Activated CD4-positive, alpha-beta memory T cell treated with anti-CD3 and anti-CD28 coated beads for 36 hours (primary cell): ENCODE measurements at regions of chr10 and their contacts with region 1.

Region 1: DNA sequence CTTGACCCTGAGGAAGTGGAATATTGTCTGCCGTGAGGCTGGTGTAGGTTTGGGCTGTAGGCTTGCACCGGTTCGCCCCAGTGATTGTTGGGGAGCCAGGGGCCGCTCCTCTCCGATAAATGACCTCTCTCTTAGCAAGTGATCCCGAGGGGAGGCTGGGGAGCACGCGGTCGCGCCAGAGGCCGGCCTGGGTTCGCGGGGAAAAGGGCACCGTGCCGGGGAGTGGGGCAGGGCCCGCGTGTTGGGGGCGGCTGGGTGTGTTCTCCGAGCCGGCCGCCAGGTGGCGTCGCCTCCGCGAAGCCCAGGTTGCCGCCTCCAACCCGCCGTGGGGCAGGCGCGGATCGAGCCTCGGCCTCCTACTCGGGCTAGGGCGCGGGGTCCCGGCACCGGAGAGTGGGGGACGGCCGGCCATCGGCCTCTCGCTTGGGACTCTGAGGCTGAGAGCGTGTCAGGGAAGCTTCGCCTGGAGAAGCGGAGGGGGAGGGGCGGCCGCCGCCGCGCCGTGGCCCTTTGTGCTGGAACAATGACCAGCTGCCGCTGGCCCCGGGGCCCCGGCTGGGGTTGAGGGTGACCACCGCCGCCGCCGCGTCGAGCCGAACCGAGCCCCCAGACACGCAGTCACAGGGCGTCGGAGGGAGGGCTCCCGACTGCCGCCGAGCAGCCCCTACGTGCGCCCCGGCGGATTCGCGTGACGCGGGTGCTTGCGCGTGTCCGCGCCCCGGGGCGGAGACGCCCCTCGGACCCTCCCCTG is 442 bp upstream of the LZTS2 start:
- DNase-seq: peak; percentile 81
- H3K4me3 Mint-ChIP-seq: peak overlapping the region; percentile 76
- H3K27ac Mint-ChIP-seq: peak overlapping the region; percentile 79
- H3K4me1 Mint-ChIP-seq: peaks cover 20% of the 10 kb centered on the region
- H3K27me3 Mint-ChIP-seq: no peaks in the 10 kb centered on the region

Region 2: DNA sequence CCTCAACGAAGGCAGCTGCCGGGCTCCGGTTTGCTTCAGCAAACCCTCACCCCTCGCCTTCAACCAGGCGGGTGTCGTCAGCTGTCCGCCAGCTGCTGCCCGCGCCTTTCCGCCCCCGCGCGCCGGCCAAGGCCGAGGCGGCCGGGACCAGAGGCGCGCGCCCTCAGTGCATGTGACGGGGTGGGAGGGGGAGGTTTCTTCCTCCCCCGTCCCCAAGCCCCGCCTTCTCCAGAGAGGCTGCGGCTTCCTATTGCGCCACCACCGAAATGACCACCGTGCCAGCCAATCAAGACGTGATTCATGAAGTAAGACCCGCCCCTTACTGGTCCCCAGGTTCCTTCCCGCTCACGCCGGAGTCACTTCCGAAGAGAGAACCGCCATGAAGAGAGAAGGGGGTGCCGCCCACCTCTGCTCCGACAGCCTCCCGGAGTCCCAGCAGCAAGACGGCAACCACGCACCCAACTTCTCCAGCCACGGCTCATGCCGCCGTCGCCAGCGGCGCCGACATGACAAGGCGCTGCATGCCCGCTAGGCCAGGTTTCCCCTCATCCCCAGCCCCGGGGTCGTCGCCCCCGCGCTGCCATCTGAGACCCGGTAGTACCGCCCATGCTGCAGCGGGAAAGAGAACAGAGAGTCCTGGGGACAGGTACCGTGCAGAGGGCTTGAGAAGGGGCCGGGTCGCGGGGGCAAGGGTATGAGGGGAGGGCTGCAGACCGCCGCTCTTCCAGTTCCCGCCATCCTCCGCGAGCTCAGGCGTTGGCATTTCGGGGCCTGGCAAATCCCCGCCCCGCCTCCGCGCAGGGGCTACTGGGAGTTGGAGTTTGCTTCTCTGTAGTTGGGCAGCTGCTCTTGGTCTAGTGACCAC is 86.3 kb before region 1 on chr10 and contains the start of gene SLF2:
- CTCF ChIA-PET with region 1: interaction called, 3 read pairs
- POLR2A ChIA-PET with region 1: no interaction called
- intact Hi-C with region 1: loop called (anchors 5 kb)
- DNase-seq: peak; percentile 97
- H3K4me3 Mint-ChIP-seq: peak within 1 kb of the TSS; percentile 99
- H3K27ac Mint-ChIP-seq: peak within 1 kb of the TSS; percentile 99
- H3K4me1 Mint-ChIP-seq: peaks cover 47% of the 10 kb centered on the region
- H3K27me3 Mint-ChIP-seq: no peaks in the 10 kb centered on the region
- total RNA-seq, gene SLF2: 33.9 to 35.9 TPM

Region 3: GRCh38 chr10:100934084-100934659 is 65.0 kb before region 1 on chr10:
- CTCF ChIA-PET with region 1: no interaction called
- POLR2A ChIA-PET with region 1: no interaction called
- intact Hi-C with region 1: no loop called
- DNase-seq: no peak
- H3K4me3 Mint-ChIP-seq: no peak overlapping the region
- H3K27ac Mint-ChIP-seq: no peak overlapping the region
- H3K4me1 Mint-ChIP-seq: no peaks in the 10 kb centered on the region
- H3K27me3 Mint-ChIP-seq: no peaks in the 10 kb centered on the region

Region 4: GRCh38 chr10:100986952-100987750 is 12.0 kb before region 1 on chr10 and contains the starts of genes MRPL43 and TWNK:
- CTCF ChIA-PET with region 1: interaction called, 58 read pairs
- POLR2A ChIA-PET with region 1: interaction called, 4 read pairs
- intact Hi-C with region 1: loop called (anchors 1 kb)
- DNase-seq: peak; percentile 92
- H3K4me3 Mint-ChIP-seq: peak within 1 kb of the TSS; percentile 92
- H3K27ac Mint-ChIP-seq: peak within 1 kb of the TSS; percentile 76
- H3K4me1 Mint-ChIP-seq: peaks cover 46% of the 10 kb centered on the region
- H3K27me3 Mint-ChIP-seq: no peaks in the 10 kb centered on the region
- total RNA-seq, gene MRPL43: 47.0 to 50.1 TPM
- total RNA-seq, gene TWNK: 12.8 to 14.0 TPM

Region 5: GRCh38 chr10:101012525-101013364 is 13.6 kb after region 1 on chr10:
- CTCF ChIA-PET with region 1: interaction called, 199 read pairs
- POLR2A ChIA-PET with region 1: interaction called, 4 read pairs
- intact Hi-C with region 1: loop called (anchors 1 kb)
- DNase-seq: peak; percentile 86
- H3K4me3 Mint-ChIP-seq: peak overlapping the region; percentile 20
- H3K27ac Mint-ChIP-seq: no peak overlapping the region
- H3K4me1 Mint-ChIP-seq: peaks cover 22% of the 10 kb centered on the region
- H3K27me3 Mint-ChIP-seq: peaks cover 26% of the 10 kb centered on the region

Region 6: DNA sequence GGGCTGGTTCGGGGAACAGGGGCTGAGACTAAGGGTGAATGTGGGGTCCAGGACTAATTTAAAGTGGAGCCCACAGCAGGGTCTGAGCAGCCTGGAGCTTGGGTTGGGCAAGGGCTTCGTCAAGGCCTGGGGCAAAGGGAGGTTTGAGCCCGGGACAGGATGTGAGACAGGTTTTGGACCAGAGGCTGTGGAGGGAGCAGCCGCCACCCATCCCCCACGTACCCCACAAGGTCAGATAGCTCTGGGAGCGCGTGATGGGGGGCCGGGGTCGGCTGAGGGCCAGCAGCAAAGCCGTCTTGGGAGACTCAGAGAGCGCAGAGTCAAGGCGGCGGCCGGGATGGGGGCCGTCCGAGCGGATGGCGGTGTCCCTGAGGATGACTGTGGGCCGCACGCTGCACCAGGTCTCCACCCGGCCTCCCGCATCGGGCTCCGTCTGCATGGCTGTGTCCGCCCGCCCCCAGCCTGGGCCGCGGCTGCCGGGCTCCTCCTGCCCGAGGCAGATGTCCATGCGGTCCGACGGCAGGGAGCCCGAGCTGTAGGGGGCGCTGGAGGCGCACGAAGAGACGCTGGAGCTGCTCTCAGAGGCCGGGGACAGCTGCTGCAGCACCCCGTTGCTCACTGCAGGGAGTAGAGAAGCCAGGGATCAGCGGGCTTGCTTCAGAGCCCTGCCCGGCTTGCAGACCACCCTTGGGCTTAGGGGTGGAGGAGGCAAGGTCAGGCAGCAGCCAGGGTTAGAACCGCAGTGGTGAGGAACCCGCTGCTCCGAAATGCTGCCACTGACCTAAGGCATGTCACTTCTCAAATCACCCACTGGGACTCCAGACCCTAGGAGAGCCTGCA is 19.7 kb after region 1 on chr10:
- CTCF ChIA-PET with region 1: interaction called, 199 read pairs
- POLR2A ChIA-PET with region 1: interaction called, 4 read pairs
- intact Hi-C with region 1: no loop called
- DNase-seq: peak; percentile 89
- H3K4me3 Mint-ChIP-seq: no peak overlapping the region
- H3K27ac Mint-ChIP-seq: no peak overlapping the region
- H3K4me1 Mint-ChIP-seq: peaks cover 15% of the 10 kb centered on the region
- H3K27me3 Mint-ChIP-seq: peaks cover 38% of the 10 kb centered on the region

Region 7: GRCh38 chr10:101042667-101043355 is 43.6 kb after region 1 on chr10:
- CTCF ChIA-PET with region 1: interaction called, 10 read pairs
- POLR2A ChIA-PET with region 1: no interaction called
- intact Hi-C with region 1: no loop called
- DNase-seq: peak; percentile 96
- H3K4me3 Mint-ChIP-seq: peak overlapping the region; percentile 96
- H3K27ac Mint-ChIP-seq: peak overlapping the region; percentile 89
- H3K4me1 Mint-ChIP-seq: peaks cover 21% of the 10 kb centered on the region
- H3K27me3 Mint-ChIP-seq: peaks cover 18% of the 10 kb centered on the region

Region 8: DNA sequence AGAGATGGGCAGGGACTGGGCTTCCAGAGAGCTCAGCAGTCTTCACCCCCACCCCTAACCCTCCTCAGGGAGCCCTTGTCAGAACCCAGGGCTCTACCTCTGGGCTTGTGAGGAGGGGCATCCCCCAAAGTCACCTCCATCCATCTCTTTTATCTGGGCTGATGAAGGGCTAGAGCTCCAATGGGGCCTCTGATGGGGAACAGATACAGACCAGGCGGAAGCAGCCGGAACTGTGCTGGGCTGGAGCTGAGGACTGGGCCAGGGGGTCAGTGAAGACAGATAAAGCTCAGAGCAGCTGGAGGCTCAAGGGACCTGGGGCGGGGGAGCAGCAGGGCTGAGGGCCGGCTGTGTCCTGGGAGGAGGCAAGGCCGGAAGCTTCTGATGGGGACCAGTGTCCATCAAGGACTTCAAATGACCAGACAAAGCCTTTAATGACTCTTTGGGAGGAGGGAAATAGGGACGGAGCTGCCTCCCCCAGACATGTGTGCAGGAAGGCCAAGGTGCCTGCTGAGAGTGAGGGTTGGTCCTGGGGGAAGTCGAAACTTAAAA is 72.8 kb after region 1 on chr10:
- CTCF ChIA-PET with region 1: no interaction called
- POLR2A ChIA-PET with region 1: no interaction called
- intact Hi-C with region 1: no loop called
- DNase-seq: no peak
- H3K4me3 Mint-ChIP-seq: no peak overlapping the region
- H3K27ac Mint-ChIP-seq: no peak overlapping the region
- H3K4me1 Mint-ChIP-seq: peaks cover 6% of the 10 kb centered on the region
- H3K27me3 Mint-ChIP-seq: peaks cover 42% of the 10 kb centered on the region